ENCODE measurements at regions of chr1 and their contacts with region 1.

Region 1: GRCh38 chr1:119870917-119871596 is 25.3 kb downstream of the ADAM30 start:
- DNase-seq: peak; percentile 93
- H3K4me3 Mint-ChIP-seq: peak overlapping the region; percentile 36
- H3K27ac Mint-ChIP-seq: no peak overlapping the region
- H3K4me1 Mint-ChIP-seq: peaks cover 11% of the 10 kb centered on the region
- H3K27me3 Mint-ChIP-seq: peaks cover 34% of the 10 kb centered on the region

Region 2: GRCh38 chr1:119808972-119809550 is 62.0 kb before region 1 on chr1:
- intact Hi-C with region 1: loop called (anchors 10 kb)
- DNase-seq: peak; percentile 89
- H3K4me3 Mint-ChIP-seq: no peak overlapping the region
- H3K27ac Mint-ChIP-seq: no peak overlapping the region
- H3K4me1 Mint-ChIP-seq: peaks cover 4% of the 10 kb centered on the region
- H3K27me3 Mint-ChIP-seq: peaks cover 54% of the 10 kb centered on the region

Region 3: DNA sequence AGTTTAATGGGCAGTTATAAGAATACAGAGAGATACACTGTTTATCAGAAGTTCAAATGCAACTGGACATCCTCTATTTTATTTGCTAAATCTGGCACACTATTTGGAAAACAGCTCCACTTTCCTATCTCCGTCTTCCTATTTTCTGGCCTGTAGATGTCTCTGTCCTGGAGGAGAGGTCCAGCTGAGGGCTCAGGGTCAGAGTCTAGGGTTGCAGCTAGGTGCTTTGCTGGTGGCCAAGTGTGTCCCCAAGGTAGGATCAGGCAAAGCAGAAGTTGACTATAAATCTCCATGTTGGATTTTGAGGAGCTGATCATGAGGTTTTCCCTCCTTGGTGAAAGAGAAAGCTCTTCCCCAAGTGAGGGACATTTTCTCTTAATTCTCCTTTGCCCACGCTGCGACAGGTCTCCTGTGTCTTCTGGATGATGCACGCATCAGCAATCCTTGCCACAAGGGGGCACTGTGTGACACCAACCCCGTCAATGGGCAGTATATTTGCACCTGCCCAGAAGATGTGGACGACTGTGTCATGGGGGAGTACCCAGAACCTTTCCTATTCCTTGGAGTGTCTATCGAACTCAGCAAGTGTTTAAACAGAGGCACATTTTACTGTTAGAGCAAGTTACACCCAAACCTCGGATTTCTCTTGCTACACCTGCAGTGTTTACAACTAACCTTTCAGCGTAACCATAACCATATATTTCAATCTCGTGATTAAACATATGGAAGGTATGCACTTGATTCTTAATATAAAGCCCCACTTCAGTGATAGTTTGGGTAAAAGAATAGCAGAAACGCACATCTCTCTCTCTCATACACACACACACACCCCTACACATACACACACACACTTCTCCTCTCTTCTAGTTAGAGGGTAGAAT is 15.1 kb after region 1 on chr1:
- intact Hi-C with region 1: no loop called
- DNase-seq: peak; percentile 89
- H3K4me3 Mint-ChIP-seq: no peak overlapping the region
- H3K27ac Mint-ChIP-seq: no peak overlapping the region
- H3K4me1 Mint-ChIP-seq: no peaks in the 10 kb centered on the region
- H3K27me3 Mint-ChIP-seq: peaks cover 16% of the 10 kb centered on the region